Caco-2 (cell line): ENCODE measurements at regions of chr1 and their contacts with region 1.

Region 1: GRCh38 chr1:179888071-179888470 is 6.0 kb downstream of the TOR1AIP1 start:
- DNase-seq: no peak
- H3K4me3 ChIP-seq: no peak overlapping the region
- H3K4me3 Mint-ChIP-seq: no peak overlapping the region
- H3K27ac Mint-ChIP-seq: no peak overlapping the region
- H3K4me1 ChIP-seq: no peaks in the 10 kb centered on the region
- H3K4me1 Mint-ChIP-seq: peaks cover 14% of the 10 kb centered on the region
- H3K27me3 ChIP-seq: no peaks in the 10 kb centered on the region
- H3K27me3 Mint-ChIP-seq: no peaks in the 10 kb centered on the region
- CTCF ChIP-seq: no peak

Region 2: DNA sequence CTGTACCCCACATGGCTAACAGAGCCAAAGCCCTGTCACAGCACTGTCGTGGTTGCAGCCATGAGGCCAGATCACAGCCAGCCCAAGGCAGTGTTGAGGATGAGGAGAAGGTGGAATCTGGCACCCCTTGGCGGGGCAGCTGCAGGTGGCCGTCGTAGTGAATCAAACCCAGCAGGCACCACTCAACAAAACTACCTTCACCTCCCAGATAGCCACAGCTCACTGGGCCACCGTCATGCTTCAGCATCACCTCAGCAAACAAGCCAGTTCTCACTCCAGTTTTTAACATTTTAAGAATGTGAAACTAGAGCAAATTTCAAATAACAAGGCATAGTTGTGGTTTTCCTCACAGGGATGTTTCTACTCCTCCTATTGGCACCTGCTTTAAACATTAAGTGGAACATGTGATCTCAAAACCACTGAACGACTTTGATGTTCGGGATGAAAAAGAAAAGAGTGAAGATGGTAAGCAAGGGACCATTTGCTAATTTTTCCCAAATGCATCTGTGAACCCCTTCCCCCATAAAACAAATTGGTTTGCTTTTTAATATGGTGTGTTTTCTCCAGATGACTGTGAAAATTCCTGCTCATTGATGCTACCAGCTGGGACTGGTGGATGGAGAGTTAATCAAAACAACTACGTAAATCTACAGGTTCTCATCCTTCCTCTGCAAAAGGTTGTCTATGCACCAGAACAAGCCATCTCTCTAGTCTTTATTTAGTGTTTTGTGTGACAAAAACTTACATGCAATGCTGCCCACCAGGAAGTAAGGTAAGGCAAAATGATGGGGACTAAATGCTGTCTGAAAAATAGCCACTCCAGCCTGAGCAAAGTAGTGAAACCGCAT is 56.0 kb before region 1 on chr1:
- CTCF ChIA-PET with region 1: no interaction called
- POLR2A ChIA-PET with region 1: no interaction called
- intact Hi-C with region 1: no loop called
- DNase-seq: no peak
- H3K4me3 ChIP-seq: no peak overlapping the region
- H3K4me3 Mint-ChIP-seq: no peak overlapping the region
- H3K27ac Mint-ChIP-seq: no peak overlapping the region
- H3K4me1 ChIP-seq: no peaks in the 10 kb centered on the region
- H3K4me1 Mint-ChIP-seq: no peaks in the 10 kb centered on the region
- H3K27me3 ChIP-seq: no peaks in the 10 kb centered on the region
- H3K27me3 Mint-ChIP-seq: no peaks in the 10 kb centered on the region
- CTCF ChIP-seq: no peak

Region 3: DNA sequence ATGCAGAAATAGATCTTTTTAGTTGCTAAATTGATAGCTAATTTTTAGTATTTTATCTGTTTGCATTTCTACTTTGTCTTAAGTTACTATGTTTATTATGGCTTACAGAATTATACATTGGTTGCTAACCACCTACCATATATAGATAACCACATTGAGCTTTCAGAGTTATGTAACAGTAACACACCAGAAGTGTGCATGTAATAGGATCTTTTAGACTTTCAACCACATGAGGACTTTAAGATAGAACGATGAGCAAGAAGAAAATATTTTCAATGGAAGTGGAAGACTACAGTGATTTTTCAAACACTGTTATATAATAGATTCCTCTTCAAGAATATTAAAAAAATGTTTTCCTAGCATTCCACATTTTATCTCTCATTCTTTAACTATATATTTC is 22.9 kb after region 1 on chr1:
- CTCF ChIA-PET with region 1: interaction called, 10 read pairs
- POLR2A ChIA-PET with region 1: no interaction called
- intact Hi-C with region 1: no loop called
- DNase-seq: no peak
- H3K4me3 ChIP-seq: no peak overlapping the region
- H3K4me3 Mint-ChIP-seq: no peak overlapping the region
- H3K27ac Mint-ChIP-seq: no peak overlapping the region
- H3K4me1 ChIP-seq: no peaks in the 10 kb centered on the region
- H3K4me1 Mint-ChIP-seq: no peaks in the 10 kb centered on the region
- H3K27me3 ChIP-seq: no peaks in the 10 kb centered on the region
- H3K27me3 Mint-ChIP-seq: no peaks in the 10 kb centered on the region
- CTCF ChIP-seq: no peak

Region 4: GRCh38 chr1:180057883-180058396 is 169.9 kb after region 1 on chr1:
- CTCF ChIA-PET with region 1: no interaction called
- POLR2A ChIA-PET with region 1: interaction called, 11 read pairs
- intact Hi-C with region 1: no loop called
- DNase-seq: no peak
- H3K4me3 ChIP-seq: no peak overlapping the region
- H3K4me3 Mint-ChIP-seq: no peak overlapping the region
- H3K27ac Mint-ChIP-seq: no peak overlapping the region
- H3K4me1 ChIP-seq: no peaks in the 10 kb centered on the region
- H3K4me1 Mint-ChIP-seq: peaks cover 10% of the 10 kb centered on the region
- H3K27me3 ChIP-seq: no peaks in the 10 kb centered on the region
- H3K27me3 Mint-ChIP-seq: no peaks in the 10 kb centered on the region
- CTCF ChIP-seq: no peak